ENCODE measurements at regions of chr4 and their contacts with region 1.

Region 1: DNA sequence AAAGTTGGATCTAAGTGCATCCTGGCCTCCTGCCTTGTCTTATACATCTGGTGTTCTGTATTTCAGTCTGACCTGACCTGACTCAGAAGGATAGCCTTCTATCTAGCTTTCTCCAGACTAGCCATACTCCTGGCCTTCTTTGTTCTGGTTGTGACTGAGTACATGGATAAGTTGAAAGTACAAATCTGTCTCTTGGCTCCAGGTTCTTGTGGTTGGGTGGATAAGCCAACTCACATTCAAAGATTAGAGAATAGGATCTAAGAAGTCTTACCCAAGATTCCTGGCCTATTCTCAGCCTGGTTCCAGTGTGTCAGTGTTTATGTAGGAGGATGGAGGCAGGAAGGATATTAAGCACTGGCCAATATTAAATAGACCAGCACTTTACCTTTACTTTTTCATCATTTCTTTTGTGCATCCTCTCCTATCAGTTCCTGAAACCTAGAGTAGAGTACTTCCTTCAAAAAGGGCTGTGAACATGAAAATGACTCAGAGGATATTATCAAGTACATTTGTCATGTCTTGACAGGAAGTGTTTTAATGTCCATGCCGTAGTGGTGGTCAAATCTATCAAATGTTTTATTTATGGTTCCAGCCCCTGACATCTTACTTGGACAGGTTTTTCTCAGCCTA is 123.5 kb downstream of the IL15 start:
- DNase-seq: peak; percentile 67
- H3K4me3 ChIP-seq: no peak overlapping the region
- H3K27ac ChIP-seq: peak overlapping the region; percentile 81
- H3K4me1 ChIP-seq: peaks cover 36% of the 10 kb centered on the region
- H3K27me3 ChIP-seq: no peaks in the 10 kb centered on the region
- CTCF ChIP-seq: no peak
- POLR2A ChIP-seq: no peak

Region 2: DNA sequence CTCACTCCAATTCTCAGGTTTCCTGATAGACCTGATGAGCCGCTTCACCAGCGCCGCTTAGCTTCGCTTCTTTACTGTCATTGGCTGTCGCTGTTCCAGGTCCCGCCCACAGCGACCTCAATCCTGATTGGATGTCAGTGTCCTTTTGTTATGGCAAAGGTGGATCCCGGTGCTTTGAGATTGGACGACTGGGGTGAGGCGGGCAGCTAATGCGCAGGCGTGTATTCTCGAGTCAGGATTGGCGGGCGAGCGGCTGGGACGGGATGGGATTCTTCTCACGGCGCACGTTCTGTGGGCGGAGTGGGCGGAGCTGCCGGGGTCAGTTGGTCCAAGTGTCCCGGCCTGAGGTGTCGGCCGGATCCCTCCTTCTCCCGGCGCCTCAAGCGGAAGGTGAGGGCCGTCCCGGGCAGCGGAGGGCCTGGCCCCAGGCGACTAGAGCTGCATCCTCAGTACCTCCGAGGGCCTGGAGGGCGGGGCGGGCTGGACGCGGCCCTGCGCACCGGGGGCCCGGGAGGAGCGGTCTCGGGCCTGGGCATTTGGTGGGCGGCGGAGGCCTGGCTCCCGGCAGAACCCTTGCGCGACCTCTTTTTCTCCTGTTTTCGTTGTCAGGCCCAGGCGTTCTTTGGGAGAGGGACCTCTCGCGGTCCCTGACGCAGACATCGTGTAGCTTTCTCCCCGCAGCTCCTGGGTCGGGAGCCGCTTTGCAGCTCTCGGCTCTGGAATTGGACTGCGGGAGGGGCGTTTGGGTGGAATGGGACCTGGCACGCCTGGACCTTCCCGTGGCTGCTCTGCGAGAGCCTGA is 1386.4 kb before region 1 on chr4 and contains the start of gene SCOC:
- CTCF ChIA-PET with region 1: no interaction called
- POLR2A ChIA-PET with region 1: no interaction called
- dilution Hi-C with region 1: no loop called
- intact Hi-C with region 1: no loop called
- DNase-seq: peak; percentile 100
- H3K4me3 ChIP-seq: peak within 1 kb of the TSS; percentile 76 to 92 (median 79)
- H3K27ac ChIP-seq: peak within 1 kb of the TSS; percentile 71
- H3K4me1 ChIP-seq: peaks cover 14% of the 10 kb centered on the region
- H3K27me3 ChIP-seq: no peaks in the 10 kb centered on the region
- CTCF ChIP-seq: no peak
- POLR2A ChIP-seq: peak; percentile 80
- total RNA-seq, gene SCOC: 38.3 and 38.5 TPM in 2 replicates

Region 3: GRCh38 chr4:141636082-141636770 is 123.7 kb before region 1 on chr4 and contains the start of gene IL15:
- CTCF ChIA-PET with region 1: interaction called, 5 read pairs
- POLR2A ChIA-PET with region 1: no interaction called
- dilution Hi-C with region 1: no loop called
- intact Hi-C with region 1: loop called (anchors 5 kb)
- DNase-seq: peak; percentile 74
- H3K4me3 ChIP-seq: peak within 1 kb of the TSS; percentile 79 to 90 (median 86)
- H3K27ac ChIP-seq: peak within 1 kb of the TSS; percentile 25
- H3K4me1 ChIP-seq: peaks cover 8% of the 10 kb centered on the region
- H3K27me3 ChIP-seq: no peaks in the 10 kb centered on the region
- CTCF ChIP-seq: no peak
- POLR2A ChIP-seq: no peak
- total RNA-seq, gene IL15: 3.0 and 3.1 TPM in 2 replicates

Region 4: DNA sequence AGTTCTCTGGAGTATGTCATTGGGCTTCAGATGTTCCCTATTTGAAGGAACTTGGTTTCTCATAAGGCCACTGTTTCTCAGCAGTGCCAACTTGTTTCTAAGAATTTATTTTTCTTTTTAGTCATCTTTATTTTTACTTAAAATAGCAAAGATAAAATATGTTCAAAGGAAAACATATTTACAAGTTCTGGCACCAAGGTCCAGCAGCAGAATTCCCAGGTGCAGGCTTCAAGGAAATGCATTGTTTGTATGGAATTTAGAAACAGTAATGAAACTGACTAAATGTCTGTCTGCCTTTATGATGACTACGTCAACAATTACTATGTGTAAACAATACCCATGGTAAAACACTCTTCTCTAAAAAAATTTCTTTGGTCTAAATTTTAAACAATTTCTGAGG is 13.9 kb before region 1 on chr4:
- CTCF ChIA-PET with region 1: interaction called, 3 read pairs
- POLR2A ChIA-PET with region 1: no interaction called
- dilution Hi-C with region 1: no loop called
- intact Hi-C with region 1: loop called (anchors 1 kb)
- DNase-seq: peak; percentile 78
- H3K4me3 ChIP-seq: no peak overlapping the region
- H3K27ac ChIP-seq: peak overlapping the region; percentile 20
- H3K4me1 ChIP-seq: peaks cover 9% of the 10 kb centered on the region
- H3K27me3 ChIP-seq: no peaks in the 10 kb centered on the region
- CTCF ChIP-seq: no peak
- POLR2A ChIP-seq: no peak

Region 5: DNA sequence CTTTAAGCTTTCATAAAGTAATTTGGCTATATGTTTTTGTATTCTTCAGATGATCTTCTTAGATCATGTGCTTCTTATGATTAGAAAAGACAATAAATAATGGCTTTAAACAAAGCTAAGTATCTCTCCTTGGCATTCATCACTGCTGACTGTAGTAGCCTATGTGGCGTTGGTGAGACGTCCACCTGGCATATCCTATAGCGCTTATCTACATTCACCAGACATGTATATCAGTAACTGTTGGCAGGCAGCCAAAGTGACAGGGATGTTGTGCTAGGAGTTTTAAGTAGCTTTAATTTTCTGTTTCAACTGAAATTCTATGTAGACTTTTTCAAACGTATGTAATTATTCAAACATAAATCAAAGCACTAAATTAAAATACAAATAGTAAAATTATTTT is 152.9 kb after region 1 on chr4:
- CTCF ChIA-PET with region 1: interaction called, 5 read pairs
- POLR2A ChIA-PET with region 1: no interaction called
- dilution Hi-C with region 1: no loop called
- intact Hi-C with region 1: loop called (anchors 2 kb)
- DNase-seq: peak; percentile 97
- H3K4me3 ChIP-seq: no peak overlapping the region
- H3K27ac ChIP-seq: peak overlapping the region; percentile 44
- H3K4me1 ChIP-seq: peaks cover 11% of the 10 kb centered on the region
- H3K27me3 ChIP-seq: no peaks in the 10 kb centered on the region
- CTCF ChIP-seq: no peak
- POLR2A ChIP-seq: no peak

Region 6: GRCh38 chr4:142095886-142096605 is 336.1 kb after region 1 on chr4:
- CTCF ChIA-PET with region 1: interaction called, 3 read pairs
- POLR2A ChIA-PET with region 1: no interaction called
- dilution Hi-C with region 1: no loop called
- intact Hi-C with region 1: loop called (anchors 1 kb)
- DNase-seq: peak; percentile 94
- H3K4me3 ChIP-seq: no peak overlapping the region
- H3K27ac ChIP-seq: peak overlapping the region; percentile 68
- H3K4me1 ChIP-seq: peaks cover 28% of the 10 kb centered on the region
- H3K27me3 ChIP-seq: no peaks in the 10 kb centered on the region
- CTCF ChIP-seq: no peak
- POLR2A ChIP-seq: no peak